Caco-2 (cell line): ENCODE measurements at regions of chr4 and their contacts with region 1.

Region 1: DNA sequence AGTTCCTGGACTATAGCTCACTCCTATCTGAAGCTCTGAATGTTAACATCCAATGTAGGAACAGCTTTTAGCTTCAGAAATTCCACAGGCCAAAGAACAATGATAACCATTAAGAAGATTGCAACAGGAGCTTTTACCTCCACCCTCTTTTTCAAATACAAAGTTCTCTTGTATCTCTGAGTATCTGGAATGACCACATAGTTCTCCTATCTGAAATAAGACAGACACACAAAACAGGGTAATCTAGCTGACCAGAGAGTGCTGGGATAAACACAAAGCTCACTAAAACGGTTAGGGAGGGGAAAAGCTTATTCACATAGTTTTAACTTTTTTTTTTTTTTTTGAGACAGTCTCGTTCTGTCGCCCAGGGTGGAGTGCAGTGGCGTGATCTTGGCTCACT is 28.0 kb downstream of the TRIML2 start:
- DNase-seq: peak; percentile 58 to 67
- H3K4me3 ChIP-seq: no peak overlapping the region
- H3K4me3 Mint-ChIP-seq: peak overlapping the region; percentile 56
- H3K27ac Mint-ChIP-seq: peak overlapping the region; percentile 91
- H3K4me1 ChIP-seq: peaks cover 38% of the 10 kb centered on the region
- H3K4me1 Mint-ChIP-seq: peaks cover 26% of the 10 kb centered on the region
- H3K27me3 ChIP-seq: no peaks in the 10 kb centered on the region
- H3K27me3 Mint-ChIP-seq: no peaks in the 10 kb centered on the region
- CTCF ChIP-seq: no peak

Region 2: DNA sequence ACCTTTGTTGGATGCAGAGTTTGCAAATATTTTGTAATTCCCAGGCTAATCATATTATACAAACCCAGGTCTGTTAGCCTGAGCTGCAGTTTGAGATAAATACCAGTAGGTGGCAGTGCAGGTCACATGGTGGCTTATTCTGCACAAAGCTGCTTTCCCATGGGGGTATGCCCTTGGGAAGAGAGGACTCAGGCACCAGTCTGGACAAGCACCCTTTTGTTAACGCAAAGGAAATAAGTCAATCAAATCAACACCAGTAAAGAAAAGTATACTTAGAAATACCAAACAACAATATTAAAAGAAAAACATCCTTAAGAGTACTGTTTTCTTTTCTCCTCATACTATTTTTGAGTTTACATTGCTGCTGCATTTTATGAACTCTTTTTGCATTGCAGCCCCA is 474.8 kb before region 1 on chr4:
- CTCF ChIA-PET with region 1: no interaction called
- POLR2A ChIA-PET with region 1: no interaction called
- intact Hi-C with region 1: loop called (anchors 10 kb)
- DNase-seq: peak; percentile 38 to 48
- H3K4me3 ChIP-seq: no peak overlapping the region
- H3K4me3 Mint-ChIP-seq: no peak overlapping the region
- H3K27ac Mint-ChIP-seq: no peak overlapping the region
- H3K4me1 ChIP-seq: no peaks in the 10 kb centered on the region
- H3K4me1 Mint-ChIP-seq: no peaks in the 10 kb centered on the region
- H3K27me3 ChIP-seq: no peaks in the 10 kb centered on the region
- H3K27me3 Mint-ChIP-seq: no peaks in the 10 kb centered on the region
- CTCF ChIP-seq: peak; percentile 68 to 82

Region 3: DNA sequence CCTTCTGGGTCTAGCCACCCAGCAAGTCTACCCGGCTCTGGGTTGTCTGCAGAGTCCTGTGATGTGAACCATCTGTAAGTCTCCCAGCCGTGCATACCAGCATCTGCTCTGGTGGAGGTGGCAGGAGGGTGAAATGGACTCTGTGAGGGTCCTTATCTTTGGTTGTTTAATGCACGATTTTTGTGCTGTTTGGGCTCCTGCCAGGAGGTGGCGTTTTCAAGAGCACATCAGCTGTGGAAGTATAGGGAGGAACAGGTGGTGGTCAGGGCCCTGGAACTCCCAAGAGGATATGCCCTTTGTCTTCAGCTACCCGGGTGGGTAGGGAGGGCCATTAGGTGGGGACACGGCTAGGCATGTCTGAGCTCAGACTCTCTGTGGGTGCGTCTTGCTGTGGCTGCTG is 152.4 kb before region 1 on chr4:
- CTCF ChIA-PET with region 1: no interaction called
- POLR2A ChIA-PET with region 1: no interaction called
- intact Hi-C with region 1: loop called (anchors 1 kb)
- DNase-seq: peak; percentile 26 to 46
- H3K4me3 ChIP-seq: no peak overlapping the region
- H3K4me3 Mint-ChIP-seq: no peak overlapping the region
- H3K27ac Mint-ChIP-seq: peak overlapping the region; percentile 49
- H3K4me1 ChIP-seq: peaks cover 17% of the 10 kb centered on the region
- H3K4me1 Mint-ChIP-seq: peaks cover 7% of the 10 kb centered on the region
- H3K27me3 ChIP-seq: no peaks in the 10 kb centered on the region
- H3K27me3 Mint-ChIP-seq: no peaks in the 10 kb centered on the region
- CTCF ChIP-seq: peak in 1 of 2 experiments; percentile 43

Region 4: GRCh38 chr4:188021548-188022249 is 59.7 kb before region 1 on chr4:
- CTCF ChIA-PET with region 1: no interaction called
- POLR2A ChIA-PET with region 1: no interaction called
- intact Hi-C with region 1: loop called (anchors 1 kb)
- DNase-seq: peak; percentile 88 to 94
- H3K4me3 ChIP-seq: no peak overlapping the region
- H3K4me3 Mint-ChIP-seq: peak overlapping the region; percentile 41
- H3K27ac Mint-ChIP-seq: peak overlapping the region; percentile 97
- H3K4me1 ChIP-seq: peaks cover 44% of the 10 kb centered on the region
- H3K4me1 Mint-ChIP-seq: peaks cover 24% of the 10 kb centered on the region
- H3K27me3 ChIP-seq: no peaks in the 10 kb centered on the region
- H3K27me3 Mint-ChIP-seq: no peaks in the 10 kb centered on the region
- CTCF ChIP-seq: no peak

Region 5: DNA sequence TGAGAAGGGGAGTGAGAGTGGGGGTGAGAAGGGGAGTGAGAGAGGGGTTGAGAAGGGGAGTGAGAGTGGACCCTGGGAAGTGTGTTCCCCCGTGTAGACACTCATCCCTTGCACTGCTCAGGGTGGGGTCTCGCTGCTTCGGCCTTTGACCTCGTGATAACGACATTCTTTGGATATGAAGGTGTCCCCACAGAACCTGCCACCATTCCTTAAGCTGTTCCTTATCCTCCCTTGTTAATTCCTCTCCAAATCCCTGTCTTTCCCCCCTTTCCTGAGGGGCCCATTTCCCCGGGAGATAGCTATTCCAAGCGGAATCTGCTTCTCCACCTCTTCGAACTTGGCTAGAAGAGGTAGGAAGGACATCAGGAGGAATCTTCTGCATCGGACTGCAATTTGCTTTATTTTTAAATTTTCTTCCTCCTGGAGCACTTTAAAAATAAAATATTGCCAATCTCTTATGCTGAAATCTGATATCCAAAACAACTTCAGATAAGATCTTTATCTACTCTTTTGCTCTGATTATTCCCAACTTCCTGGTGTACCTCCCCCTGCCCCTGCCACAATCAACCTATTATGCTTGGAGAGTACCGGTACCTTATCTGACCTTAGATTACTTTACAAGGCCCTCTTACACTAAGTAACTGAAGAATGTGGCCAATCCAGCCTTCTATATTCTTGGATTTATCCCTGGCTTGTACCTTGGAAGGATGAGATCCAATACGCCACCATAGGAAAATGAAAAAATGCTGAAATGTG is 73.5 kb after region 1 on chr4:
- CTCF ChIA-PET with region 1: no interaction called
- POLR2A ChIA-PET with region 1: no interaction called
- intact Hi-C with region 1: loop called (anchors 1 kb)
- DNase-seq: peak; percentile 59 to 81
- H3K4me3 ChIP-seq: no peak overlapping the region
- H3K4me3 Mint-ChIP-seq: peak overlapping the region; percentile 60
- H3K27ac Mint-ChIP-seq: peak overlapping the region; percentile 63
- H3K4me1 ChIP-seq: peaks cover 6% of the 10 kb centered on the region
- H3K4me1 Mint-ChIP-seq: peaks cover 8% of the 10 kb centered on the region
- H3K27me3 ChIP-seq: no peaks in the 10 kb centered on the region
- H3K27me3 Mint-ChIP-seq: no peaks in the 10 kb centered on the region
- CTCF ChIP-seq: no peak